CD8-positive, alpha-beta T cell (primary cell): ENCODE measurements at regions of chr7 and their contacts with region 1.

Region 1: GRCh38 chr7:876167-876967 is at the start of gene GET4:
- DNase-seq: peak; percentile 95 to 98 (median 96)
- ATAC-seq: peak; percentile 79
- H3K4me3 ChIP-seq: peak within 1 kb of the TSS; percentile 74 to 84
- H3K4me3 Mint-ChIP-seq: peak within 1 kb of the TSS; percentile 90
- H3K27ac ChIP-seq: peak within 1 kb of the TSS; percentile 72 to 89
- H3K27ac Mint-ChIP-seq: peak within 1 kb of the TSS; percentile 89
- H3K4me1 ChIP-seq: peaks cover 25% of the 10 kb centered on the region
- H3K4me1 Mint-ChIP-seq: peaks cover 34% of the 10 kb centered on the region
- H3K27me3 ChIP-seq: no peaks in the 10 kb centered on the region
- H3K27me3 Mint-ChIP-seq: no peaks in the 10 kb centered on the region
- CTCF ChIP-seq: no peak
- total RNA-seq, gene GET4: 75.4 to 83.1 TPM

Region 2: DNA sequence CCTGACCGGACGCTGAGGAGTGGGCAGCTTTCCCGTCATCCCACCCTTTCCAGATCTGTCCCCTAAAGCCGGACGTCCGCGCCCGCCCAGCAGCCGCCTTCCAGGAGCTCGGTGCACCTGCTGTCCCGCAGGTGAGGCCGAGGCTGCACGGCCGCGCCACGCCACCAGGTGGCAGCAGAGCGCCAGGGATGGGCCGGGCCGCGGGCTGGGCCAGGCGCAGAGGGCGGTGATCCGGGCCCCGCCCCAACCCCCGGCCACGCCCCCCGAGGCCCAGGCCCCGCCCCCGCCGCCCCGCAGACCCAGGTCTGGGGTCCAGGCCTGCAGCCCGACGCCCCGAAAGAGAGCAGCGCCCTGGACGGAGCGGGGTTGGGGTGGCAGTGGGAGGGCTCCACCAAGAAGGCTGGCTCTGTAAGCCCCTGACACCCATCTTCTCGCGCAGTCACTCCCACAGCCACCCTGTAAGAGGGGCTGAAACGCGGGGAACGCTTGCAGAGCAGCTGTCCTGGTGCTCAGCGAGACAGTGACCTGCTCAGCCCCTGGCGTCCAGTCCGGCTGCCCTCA is 554.2 kb before region 1 on chr7:
- CTCF ChIA-PET with region 1: interaction called, 24 read pairs
- POLR2A ChIA-PET with region 1: no interaction called
- intact Hi-C with region 1: loop called in 1 of 2 experiments (anchors 1 kb)
- DNase-seq: peak; percentile 73 to 94 (median 86)
- ATAC-seq: peak; percentile 100
- H3K4me3 ChIP-seq: no peak overlapping the region
- H3K4me3 Mint-ChIP-seq: no peak overlapping the region
- H3K27ac ChIP-seq: no peak overlapping the region
- H3K27ac Mint-ChIP-seq: no peak overlapping the region
- H3K4me1 ChIP-seq: peaks cover 4% of the 10 kb centered on the region
- H3K4me1 Mint-ChIP-seq: no peaks in the 10 kb centered on the region
- H3K27me3 ChIP-seq: no peaks in the 10 kb centered on the region
- H3K27me3 Mint-ChIP-seq: peaks cover 27% of the 10 kb centered on the region
- CTCF ChIP-seq: peak; percentile 82

Region 3: DNA sequence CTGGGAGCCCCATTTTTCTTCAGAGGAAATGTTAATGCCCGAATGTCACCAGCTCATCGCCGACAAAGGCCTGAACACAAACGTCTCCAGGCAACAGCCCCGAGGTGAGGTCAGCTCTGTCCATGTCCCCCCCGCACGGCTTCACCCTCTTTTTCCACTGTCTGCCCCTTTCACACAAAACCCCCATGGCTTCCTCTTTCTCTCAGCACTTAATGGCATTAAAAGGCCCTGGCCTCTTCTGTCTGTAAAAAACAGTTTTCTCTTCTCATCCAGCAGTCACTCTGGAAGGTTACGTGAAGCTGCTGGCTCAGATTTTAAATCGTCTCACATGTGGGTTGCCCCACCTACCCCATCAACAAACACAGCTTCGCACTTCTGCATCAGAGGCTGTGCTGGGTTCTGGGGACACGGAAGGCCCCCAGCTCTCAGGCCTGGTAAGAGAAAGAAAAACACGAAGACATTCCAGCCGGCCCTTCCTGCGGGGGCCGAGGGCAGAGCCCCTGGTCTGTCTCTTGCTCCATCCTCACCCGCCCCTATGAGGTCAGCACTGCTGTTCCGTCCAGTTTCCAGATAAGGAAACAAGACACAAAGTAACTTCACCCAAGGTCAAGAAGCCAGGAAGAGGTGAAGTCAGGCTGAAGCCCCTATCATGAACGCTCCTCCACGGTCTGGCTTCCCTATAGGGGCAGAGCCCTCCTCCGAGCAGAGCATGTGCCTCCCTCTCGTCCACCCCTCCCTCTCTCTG is 265.7 kb before region 1 on chr7:
- CTCF ChIA-PET with region 1: no interaction called
- POLR2A ChIA-PET with region 1: no interaction called
- intact Hi-C with region 1: loop called in 1 of 2 experiments (anchors 10 kb)
- DNase-seq: peak in 6 of 9 experiments; percentile 34 to 85 (median 69)
- ATAC-seq: peak; percentile 77
- H3K4me3 ChIP-seq: no peak overlapping the region
- H3K4me3 Mint-ChIP-seq: peak overlapping the region; percentile 64
- H3K27ac ChIP-seq: peak overlapping the region; percentile 69 to 71
- H3K27ac Mint-ChIP-seq: peak overlapping the region; percentile 98
- H3K4me1 ChIP-seq: peaks cover 75% of the 10 kb centered on the region
- H3K4me1 Mint-ChIP-seq: peaks cover 75% of the 10 kb centered on the region
- H3K27me3 ChIP-seq: no peaks in the 10 kb centered on the region
- H3K27me3 Mint-ChIP-seq: no peaks in the 10 kb centered on the region
- CTCF ChIP-seq: no peak

Region 4: DNA sequence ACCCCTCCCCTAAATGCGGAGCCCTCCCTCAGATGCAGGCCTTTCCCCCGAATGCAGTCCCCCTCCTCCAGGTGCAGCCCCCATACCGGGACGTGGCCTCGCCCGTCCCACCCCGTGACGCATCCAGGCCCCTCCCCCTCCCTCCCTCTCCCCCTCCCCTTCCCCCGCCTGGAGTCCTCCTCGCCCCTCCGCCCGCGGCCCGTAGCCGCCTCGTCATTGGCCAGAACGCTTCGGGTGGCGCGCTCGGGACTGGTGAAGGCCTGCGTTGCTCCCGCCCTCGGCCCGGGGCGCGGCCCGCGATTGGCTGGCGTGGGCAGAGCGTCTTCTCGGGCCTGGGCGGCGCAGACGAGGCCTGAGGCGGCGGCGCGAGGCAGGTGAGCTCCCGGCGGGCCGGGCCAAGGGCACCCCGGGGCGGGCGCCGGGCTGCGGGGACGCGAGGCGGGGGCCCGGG is 60.0 kb before region 1 on chr7:
- CTCF ChIA-PET with region 1: interaction called, 17 read pairs
- POLR2A ChIA-PET with region 1: interaction called, 7 read pairs
- intact Hi-C with region 1: loop called (anchors 1 kb)
- DNase-seq: peak; percentile 93 to 98 (median 96)
- ATAC-seq: peak; percentile 94
- H3K4me3 ChIP-seq: peak overlapping the region; percentile 40 to 53
- H3K4me3 Mint-ChIP-seq: peak overlapping the region; percentile 61
- H3K27ac ChIP-seq: no peak overlapping the region
- H3K27ac Mint-ChIP-seq: no peak overlapping the region
- H3K4me1 ChIP-seq: peaks cover 34% of the 10 kb centered on the region
- H3K4me1 Mint-ChIP-seq: peaks cover 54% of the 10 kb centered on the region
- H3K27me3 ChIP-seq: no peaks in the 10 kb centered on the region
- H3K27me3 Mint-ChIP-seq: peaks cover 2% of the 10 kb centered on the region
- CTCF ChIP-seq: no peak

Region 5: GRCh38 chr7:923108-924041 is 47.0 kb after region 1 on chr7:
- CTCF ChIA-PET with region 1: no interaction called
- POLR2A ChIA-PET with region 1: interaction called, 7 read pairs
- intact Hi-C with region 1: loop called (anchors 1 to 5 kb)
- DNase-seq: peak; percentile 82 to 97 (median 95)
- ATAC-seq: peak; percentile 72
- H3K4me3 ChIP-seq: peak overlapping the region; percentile 72 to 94
- H3K4me3 Mint-ChIP-seq: peak overlapping the region; percentile 86
- H3K27ac ChIP-seq: peak overlapping the region; percentile 83 to 87
- H3K27ac Mint-ChIP-seq: peak overlapping the region; percentile 95
- H3K4me1 ChIP-seq: peaks cover 50% of the 10 kb centered on the region
- H3K4me1 Mint-ChIP-seq: peaks cover 34% of the 10 kb centered on the region
- H3K27me3 ChIP-seq: no peaks in the 10 kb centered on the region
- H3K27me3 Mint-ChIP-seq: no peaks in the 10 kb centered on the region
- CTCF ChIP-seq: no peak

Region 6: DNA sequence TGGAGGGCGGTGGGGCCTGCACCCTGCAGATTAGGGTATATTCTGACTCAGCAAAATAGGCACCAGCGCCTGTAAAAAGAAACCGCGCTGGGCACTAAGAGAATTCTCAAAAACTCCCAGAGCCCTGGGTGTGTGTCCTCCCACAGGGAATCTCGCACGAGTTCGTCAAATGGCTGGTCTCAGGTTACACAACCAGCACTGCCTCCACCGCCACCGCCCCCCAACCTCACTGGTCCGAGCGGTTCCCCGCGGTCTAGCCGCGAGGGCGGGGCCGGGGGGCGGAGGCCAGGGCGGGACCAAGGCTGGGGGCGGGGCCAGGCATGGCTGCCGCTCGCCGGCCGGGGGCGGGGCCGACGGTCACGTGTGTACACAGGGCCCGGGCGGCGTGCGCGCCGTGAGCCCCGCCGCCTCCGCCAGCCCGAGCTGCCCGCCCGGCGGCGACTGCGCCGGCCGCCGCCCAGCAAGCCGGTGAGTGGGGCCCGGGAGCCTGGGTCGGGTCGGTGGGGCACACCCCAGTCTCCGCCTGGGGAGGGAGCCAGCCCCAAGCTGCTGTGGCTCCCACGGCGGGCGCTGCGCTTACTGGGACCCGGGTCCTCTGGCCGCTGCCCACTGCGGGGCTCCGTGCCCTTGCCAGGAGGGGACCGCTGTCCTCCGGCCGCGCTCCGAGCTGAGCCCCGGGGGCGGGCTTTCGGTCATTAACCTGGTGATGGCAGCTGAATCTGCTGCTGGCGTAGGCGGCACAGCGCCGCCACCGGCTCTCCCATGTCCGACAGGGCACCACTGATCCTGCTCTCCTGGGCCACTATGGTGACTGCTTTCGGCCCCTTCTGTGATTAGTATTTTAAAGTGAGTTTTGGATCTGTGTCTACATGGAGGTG is 168.1 kb after region 1 on chr7 and contains the start of gene GPR146:
- CTCF ChIA-PET with region 1: no interaction called
- POLR2A ChIA-PET with region 1: no interaction called
- intact Hi-C with region 1: loop called (anchors 1 to 5 kb)
- DNase-seq: peak; percentile 76 to 97 (median 91)
- ATAC-seq: peak; percentile 88
- H3K4me3 ChIP-seq: peak within 1 kb of the TSS; percentile 57 to 71
- H3K4me3 Mint-ChIP-seq: peak within 1 kb of the TSS; percentile 84
- H3K27ac ChIP-seq: peak within 1 kb of the TSS; percentile 51 to 57
- H3K27ac Mint-ChIP-seq: peak within 1 kb of the TSS; percentile 52
- H3K4me1 ChIP-seq: peaks cover 53% of the 10 kb centered on the region
- H3K4me1 Mint-ChIP-seq: peaks cover 63% of the 10 kb centered on the region
- H3K27me3 ChIP-seq: no peaks in the 10 kb centered on the region
- H3K27me3 Mint-ChIP-seq: no peaks in the 10 kb centered on the region
- CTCF ChIP-seq: peak; percentile 60
- total RNA-seq, gene GPR146: 4.4 to 5.0 TPM

Region 7: DNA sequence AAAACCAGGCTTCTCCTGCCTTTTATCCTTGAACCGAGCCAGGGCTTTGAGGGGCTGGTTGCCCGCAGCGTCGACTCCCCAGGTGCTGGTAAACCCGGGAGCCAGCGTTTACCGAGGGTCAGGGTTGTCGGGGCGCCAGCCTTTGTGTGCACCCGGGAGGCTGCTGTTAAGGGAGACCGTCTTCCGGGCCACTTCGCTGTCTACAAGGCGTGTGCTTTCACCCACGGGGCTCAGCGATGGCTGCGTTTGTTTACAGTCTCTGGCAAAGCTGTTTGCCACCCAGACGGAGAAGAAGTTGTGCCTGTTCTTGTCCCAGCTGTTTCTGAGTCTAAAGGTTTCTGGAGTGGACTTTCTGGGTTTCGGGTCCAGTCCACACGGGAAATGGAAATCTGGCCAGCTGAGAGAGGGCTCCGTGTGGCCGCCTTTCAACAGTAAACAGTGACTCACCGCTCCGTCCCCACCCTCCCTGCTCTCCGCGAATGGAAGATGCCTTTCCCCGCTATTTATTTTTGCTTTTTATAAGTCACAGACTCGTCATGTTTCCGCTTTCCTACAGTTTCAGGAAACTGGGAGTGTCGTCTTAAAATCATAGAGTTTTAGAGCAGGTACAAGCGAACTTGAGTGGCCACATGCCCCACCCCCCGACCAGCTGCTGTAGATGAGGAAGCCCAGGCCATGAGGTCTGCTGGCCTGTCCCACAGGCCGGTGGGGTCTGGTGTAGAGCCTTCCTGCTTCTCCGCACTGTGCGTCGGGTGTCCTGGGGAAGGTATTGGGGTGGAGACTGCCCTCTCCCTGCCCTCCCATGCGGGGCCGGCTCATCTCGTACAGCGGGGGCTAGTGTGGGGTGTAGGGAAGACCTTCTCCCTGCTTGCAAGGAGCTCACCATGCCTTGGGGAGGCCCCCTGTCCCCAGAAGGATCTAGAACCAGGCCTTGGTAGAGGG is 656.4 kb after region 1 on chr7:
- CTCF ChIA-PET with region 1: no interaction called
- POLR2A ChIA-PET with region 1: no interaction called
- intact Hi-C with region 1: loop called in 1 of 2 experiments (anchors 10 kb)
- DNase-seq: peak in 8 of 9 experiments; percentile 42 to 75 (median 68)
- ATAC-seq: peak; percentile 48
- H3K4me3 ChIP-seq: peak overlapping the region; percentile 65 to 66
- H3K4me3 Mint-ChIP-seq: peak overlapping the region; percentile 89
- H3K27ac ChIP-seq: peak overlapping the region; percentile 82 to 90
- H3K27ac Mint-ChIP-seq: peak overlapping the region; percentile 99
- H3K4me1 ChIP-seq: peaks cover 33% of the 10 kb centered on the region
- H3K4me1 Mint-ChIP-seq: peaks cover 38% of the 10 kb centered on the region
- H3K27me3 ChIP-seq: no peaks in the 10 kb centered on the region
- H3K27me3 Mint-ChIP-seq: no peaks in the 10 kb centered on the region
- CTCF ChIP-seq: no peak